Right ventricle myocardium superior (tissue), 1 donor: ENCODE measurements at regions of chr12 and their contacts with region 1.

Region 1: DNA sequence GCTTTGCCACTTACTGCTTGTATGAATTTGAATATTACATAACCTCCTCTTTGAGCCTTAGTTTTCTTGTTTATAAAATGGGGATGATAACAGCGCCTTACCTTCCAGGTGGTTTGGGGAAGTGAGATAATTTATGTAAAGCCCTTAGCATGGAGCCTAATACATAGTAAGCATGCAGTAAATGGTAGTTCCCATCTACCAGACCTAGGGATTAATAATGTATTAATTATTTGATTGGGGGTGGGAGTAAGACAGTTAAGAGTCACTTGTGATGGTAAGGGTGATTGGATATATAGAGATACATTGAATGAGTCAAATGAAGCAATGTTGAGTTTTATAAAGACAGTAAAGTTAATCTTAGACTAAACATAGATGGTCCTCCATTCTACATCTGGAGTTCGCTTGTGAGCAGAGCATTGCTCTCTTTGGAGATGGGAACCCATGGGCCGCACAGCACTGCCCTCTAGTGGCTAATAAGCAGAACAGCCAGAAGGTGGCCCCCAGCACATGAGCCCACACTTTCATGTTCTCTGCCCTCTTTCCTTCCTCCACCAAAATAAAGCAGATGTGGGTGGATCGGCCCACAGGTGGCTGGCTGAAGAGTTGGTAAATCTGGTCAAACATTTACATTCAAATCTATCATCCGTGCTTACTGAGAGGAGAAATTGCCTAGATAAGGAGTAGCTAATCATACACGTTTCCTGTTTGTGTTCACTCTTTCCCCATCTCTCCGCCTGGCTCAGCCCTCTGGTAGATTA is 26.5 kb upstream of the TAMALIN start:
- DNase-seq: peak; percentile 80
- ATAC-seq: peak; percentile 95

Region 2: DNA sequence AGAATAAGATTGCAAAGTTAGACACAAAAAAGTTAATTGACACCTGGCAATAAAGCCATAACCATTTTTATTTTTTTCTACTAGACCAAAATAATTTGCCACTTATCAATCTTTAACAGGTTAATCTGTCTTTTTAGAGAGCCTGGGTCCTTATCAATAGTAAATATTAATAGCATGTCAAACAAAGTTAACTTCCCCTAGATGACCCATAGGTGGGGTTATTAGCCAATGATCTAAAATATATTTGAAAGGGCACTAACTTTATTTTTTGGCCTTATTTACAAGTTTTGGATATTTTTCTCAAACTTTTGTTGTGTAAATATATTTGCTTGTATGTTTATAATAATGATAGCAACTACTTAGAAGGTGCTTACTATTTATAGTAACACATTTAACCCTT is 88.4 kb before region 1 on chr12:
- intact Hi-C with region 1: loop called (anchors 5 kb)
- DNase-seq: no peak
- ATAC-seq: no peak

Region 3: DNA sequence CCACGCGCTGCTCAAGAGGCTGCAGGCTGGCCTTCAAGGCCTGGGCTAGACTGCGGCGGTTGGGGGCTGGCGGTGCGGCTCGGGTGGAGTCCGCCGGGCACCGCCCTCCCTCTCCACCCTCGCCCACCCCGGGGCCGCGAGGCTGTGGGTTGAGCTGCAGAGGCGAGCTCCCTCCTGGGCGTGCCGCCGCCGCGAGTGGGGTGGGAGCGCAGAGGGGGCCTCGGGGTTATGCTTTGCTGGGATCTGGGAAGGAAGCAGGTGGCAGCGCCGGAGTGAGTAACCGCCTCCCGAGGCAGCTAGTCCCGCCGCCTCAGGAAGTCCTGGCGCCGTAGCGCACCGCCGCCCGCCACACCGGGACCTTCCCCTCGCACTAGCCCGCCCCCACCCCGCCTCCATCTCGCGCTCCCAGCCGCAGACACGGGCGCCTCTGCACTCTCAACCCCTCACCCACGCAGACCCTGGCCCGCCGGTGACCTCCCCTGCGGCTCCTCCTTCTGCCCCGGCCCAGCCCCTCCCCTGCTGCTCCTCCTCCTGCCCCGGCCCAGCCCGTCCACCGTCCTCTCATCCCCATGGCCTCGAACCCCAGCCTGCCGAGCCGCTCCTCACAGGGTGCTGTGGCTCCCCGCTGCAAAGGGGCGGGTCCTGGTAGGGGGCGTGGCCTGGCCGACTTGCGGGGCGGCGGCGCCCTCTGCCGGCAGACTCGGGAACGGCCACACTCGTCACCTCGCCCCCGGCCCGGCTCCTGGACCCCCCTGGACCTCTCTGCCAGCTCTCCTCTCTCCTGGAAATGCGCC is 43.1 kb after region 1 on chr12:
- intact Hi-C with region 1: loop called (anchors 5 kb)
- DNase-seq: peak; percentile 95
- ATAC-seq: peak; percentile 67